CD8-positive, alpha-beta T cell (primary cell): ENCODE measurements at regions of chr11 and their contacts with region 1.

Region 1: DNA sequence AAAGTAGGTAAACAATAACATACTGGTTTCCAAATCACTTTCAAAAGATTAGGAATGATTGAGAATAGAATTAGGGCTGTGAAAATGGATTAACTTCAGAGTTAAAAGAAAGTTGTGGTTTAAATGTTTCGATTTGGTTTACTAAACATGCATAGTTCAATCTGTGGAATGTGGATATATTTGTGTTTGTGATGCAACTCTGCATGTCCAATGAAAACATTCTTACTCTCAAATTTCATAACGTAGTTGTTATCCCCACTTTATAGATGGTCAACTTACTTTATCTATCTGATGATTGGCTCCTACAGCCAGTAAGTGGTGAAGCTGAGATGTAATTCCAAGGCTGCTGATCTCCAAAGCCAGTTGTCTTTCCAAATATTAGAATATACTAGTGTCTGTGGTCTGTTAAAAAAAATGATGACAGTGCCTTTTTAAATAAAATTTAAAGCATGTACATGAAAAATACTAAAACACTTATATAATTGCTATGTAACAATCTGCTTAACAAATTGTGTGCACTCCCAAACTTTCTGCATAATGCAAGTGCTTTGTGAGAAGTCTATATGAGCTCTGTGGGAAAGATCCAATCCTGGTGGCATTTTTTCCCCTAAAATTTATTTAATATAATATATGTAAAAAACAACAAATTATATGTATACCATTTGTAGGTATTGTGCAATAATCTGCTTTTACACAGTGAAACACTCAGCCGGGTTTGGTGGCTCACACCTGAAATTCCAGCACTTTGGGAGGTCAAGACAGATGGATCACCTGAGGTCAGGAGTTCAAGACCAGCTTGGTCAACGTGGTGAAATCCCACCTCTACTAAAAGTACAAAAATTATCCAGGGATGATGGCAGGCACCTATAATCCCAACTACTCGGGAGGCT is 9.7 kb upstream of the SIK3 start:
- DNase-seq: no peak
- ATAC-seq: no peak
- H3K4me3 ChIP-seq: no peak overlapping the region
- H3K4me3 Mint-ChIP-seq: no peak overlapping the region
- H3K27ac ChIP-seq: no peak overlapping the region
- H3K27ac Mint-ChIP-seq: no peak overlapping the region
- H3K4me1 ChIP-seq: no peaks in the 10 kb centered on the region
- H3K4me1 Mint-ChIP-seq: peaks cover 3% of the 10 kb centered on the region
- H3K27me3 ChIP-seq: no peaks in the 10 kb centered on the region
- H3K27me3 Mint-ChIP-seq: no peaks in the 10 kb centered on the region
- CTCF ChIP-seq: no peak

Region 2: GRCh38 chr11:116787786-116788486 is 320.0 kb before region 1 on chr11 and contains the start of gene ZPR1:
- CTCF ChIA-PET with region 1: interaction called, 153 read pairs
- POLR2A ChIA-PET with region 1: no interaction called
- intact Hi-C with region 1: loop called in 1 of 2 experiments (anchors 1 kb)
- DNase-seq: peak; percentile 69 to 91 (median 87)
- ATAC-seq: peak; percentile 80
- H3K4me3 ChIP-seq: peak within 1 kb of the TSS; percentile 60 to 94
- H3K4me3 Mint-ChIP-seq: peak within 1 kb of the TSS; percentile 95
- H3K27ac ChIP-seq: peak within 1 kb of the TSS; percentile 80 to 95
- H3K27ac Mint-ChIP-seq: peak within 1 kb of the TSS; percentile 91
- H3K4me1 ChIP-seq: peaks cover 29% of the 10 kb centered on the region
- H3K4me1 Mint-ChIP-seq: peaks cover 54% of the 10 kb centered on the region
- H3K27me3 ChIP-seq: no peaks in the 10 kb centered on the region
- H3K27me3 Mint-ChIP-seq: no peaks in the 10 kb centered on the region
- CTCF ChIP-seq: no peak
- total RNA-seq, gene ZPR1: 132 to 134 TPM

Region 3: DNA sequence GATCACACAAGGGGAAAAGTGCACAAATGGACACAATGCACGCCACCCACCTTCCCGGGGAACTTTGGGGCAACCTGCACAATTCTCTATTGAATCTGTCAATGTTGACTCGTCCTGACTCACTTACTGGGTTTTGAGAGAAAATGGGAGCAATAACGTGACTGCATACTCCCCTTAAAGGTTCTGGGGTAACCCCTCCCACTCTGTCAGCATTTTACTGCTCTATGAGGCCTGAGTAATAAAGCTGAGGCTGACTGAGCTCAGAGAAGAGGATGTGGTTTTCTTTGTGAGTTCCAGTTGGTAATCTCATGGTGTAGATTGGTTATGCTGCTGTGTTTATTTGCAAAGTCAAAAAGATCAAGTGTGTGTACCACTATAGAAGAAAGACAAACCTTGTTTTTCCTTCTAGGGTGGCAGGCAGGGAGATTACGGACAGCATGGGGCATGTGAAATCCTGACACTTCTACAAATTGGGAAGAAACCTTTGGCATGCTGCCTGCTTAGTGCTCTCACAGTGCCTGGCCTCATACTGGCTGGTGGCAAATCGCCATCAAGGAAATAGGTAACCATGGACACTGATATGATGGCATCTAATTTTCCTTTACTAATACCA is 254.4 kb before region 1 on chr11:
- CTCF ChIA-PET with region 1: interaction called, 19 read pairs
- POLR2A ChIA-PET with region 1: no interaction called
- intact Hi-C with region 1: no loop called
- DNase-seq: peak; percentile 13 to 90 (median 61)
- ATAC-seq: peak; percentile 95
- H3K4me3 ChIP-seq: peak overlapping the region; percentile 4 to 7
- H3K4me3 Mint-ChIP-seq: peak overlapping the region; percentile 47
- H3K27ac ChIP-seq: peak overlapping the region; percentile 47 to 72
- H3K27ac Mint-ChIP-seq: peak overlapping the region; percentile 69
- H3K4me1 ChIP-seq: peaks cover 56% of the 10 kb centered on the region
- H3K4me1 Mint-ChIP-seq: peaks cover 73% of the 10 kb centered on the region
- H3K27me3 ChIP-seq: no peaks in the 10 kb centered on the region
- H3K27me3 Mint-ChIP-seq: no peaks in the 10 kb centered on the region
- CTCF ChIP-seq: no peak

Region 4: DNA sequence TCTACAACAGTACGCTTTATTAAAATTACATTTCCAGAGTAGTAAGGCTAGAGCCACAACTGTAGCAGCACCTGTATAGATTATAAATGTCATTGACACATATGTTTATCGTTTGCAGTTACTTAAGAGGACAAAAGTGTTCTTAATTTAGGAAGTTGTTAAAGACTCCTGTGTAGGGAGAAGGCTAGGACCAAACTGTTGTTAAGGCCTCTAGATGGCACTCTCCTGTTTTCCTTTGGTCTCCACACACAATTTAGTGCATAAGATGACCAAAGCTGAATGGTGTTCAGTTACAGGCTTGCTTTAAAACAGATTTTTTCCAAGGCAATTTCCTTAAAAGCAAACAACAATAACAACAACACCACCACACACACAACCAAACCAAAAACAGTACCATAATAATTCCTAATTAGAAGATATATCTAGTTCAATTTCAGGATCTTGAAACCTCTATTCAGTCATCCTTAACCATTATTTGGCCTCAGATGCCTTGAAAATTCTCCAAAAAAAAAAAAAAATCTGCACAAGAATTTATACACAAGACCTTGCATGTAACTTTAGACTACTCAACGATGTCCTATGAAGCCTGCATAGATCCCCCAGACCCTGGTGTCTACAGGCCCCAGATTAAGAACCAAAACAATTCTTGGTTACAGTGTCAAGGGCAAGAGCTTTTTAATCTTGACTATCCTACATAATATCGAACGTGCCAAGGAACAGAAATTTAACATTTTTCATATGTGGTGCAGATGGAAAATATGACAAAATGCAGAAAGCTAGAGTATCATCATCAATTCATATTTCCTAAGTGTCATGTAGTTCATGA is 227.9 kb before region 1 on chr11:
- CTCF ChIA-PET with region 1: interaction called, 104 read pairs
- POLR2A ChIA-PET with region 1: no interaction called
- intact Hi-C with region 1: loop called (anchors 1 kb)
- DNase-seq: peak in 4 of 9 experiments; percentile 15 to 76 (median 44)
- ATAC-seq: peak; percentile 75
- H3K4me3 ChIP-seq: no peak overlapping the region
- H3K4me3 Mint-ChIP-seq: no peak overlapping the region
- H3K27ac ChIP-seq: no peak overlapping the region
- H3K27ac Mint-ChIP-seq: no peak overlapping the region
- H3K4me1 ChIP-seq: no peaks in the 10 kb centered on the region
- H3K4me1 Mint-ChIP-seq: peaks cover 5% of the 10 kb centered on the region
- H3K27me3 ChIP-seq: no peaks in the 10 kb centered on the region
- H3K27me3 Mint-ChIP-seq: no peaks in the 10 kb centered on the region
- CTCF ChIP-seq: peak; percentile 71

Region 5: DNA sequence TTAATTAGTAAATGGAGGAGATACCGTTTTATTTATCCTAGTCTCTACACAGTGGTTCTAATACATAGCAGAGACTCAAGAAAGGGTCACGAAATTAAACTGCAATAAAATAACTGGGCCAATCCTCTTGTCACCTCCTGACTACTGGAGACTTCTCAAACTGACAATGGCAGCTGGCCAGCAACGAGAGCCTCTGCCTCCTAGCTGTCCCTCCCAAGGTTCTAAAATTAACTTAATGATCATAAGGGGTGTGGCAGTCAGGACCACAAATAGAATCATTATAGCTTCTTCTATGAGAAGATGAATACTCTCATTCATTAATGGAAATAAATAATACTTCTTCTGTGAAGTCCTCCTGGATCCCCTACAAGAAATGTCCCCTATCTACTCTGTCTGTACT is 206.7 kb before region 1 on chr11:
- CTCF ChIA-PET with region 1: interaction called, 11 read pairs
- POLR2A ChIA-PET with region 1: no interaction called
- intact Hi-C with region 1: no loop called
- DNase-seq: no peak
- ATAC-seq: no peak
- H3K4me3 ChIP-seq: no peak overlapping the region
- H3K4me3 Mint-ChIP-seq: no peak overlapping the region
- H3K27ac ChIP-seq: no peak overlapping the region
- H3K27ac Mint-ChIP-seq: no peak overlapping the region
- H3K4me1 ChIP-seq: peaks cover 8% of the 10 kb centered on the region
- H3K4me1 Mint-ChIP-seq: peaks cover 29% of the 10 kb centered on the region
- H3K27me3 ChIP-seq: no peaks in the 10 kb centered on the region
- H3K27me3 Mint-ChIP-seq: no peaks in the 10 kb centered on the region
- CTCF ChIP-seq: no peak

Region 6: DNA sequence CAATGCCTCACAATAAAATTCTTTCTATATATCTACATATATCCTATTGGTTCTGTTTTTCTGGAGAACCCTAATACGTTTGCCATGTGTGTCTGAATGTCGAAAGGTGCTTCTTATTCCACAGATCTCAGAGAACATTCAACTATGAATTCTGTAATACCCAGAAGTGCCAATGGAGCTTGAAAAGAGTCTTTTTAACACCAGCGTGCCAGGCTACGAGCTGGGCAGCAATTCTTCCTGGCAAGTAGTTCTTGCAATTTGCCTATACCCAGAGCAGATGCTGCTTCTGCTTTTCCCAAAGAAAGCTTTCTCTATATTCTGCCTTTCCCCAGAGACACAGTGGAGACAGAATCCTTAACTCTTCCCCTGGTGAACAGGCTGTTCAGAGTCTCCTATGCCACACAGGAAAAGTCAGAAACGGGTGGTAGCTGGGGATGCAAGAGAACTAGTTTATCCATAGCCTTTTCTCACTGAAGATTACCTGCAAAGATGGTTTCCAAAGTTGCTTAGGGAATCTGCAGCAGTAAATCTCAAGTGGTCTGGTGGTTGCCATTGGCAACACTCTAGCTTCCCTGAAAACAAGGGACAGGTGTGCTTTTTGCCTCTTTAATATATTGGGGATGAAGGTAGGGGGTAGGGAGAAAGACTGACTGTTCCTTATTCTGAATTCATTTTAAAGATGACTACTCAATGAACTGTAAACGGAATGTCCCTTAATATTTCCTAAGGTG is 19.4 kb after region 1 on chr11:
- CTCF ChIA-PET with region 1: interaction called, 37 read pairs
- POLR2A ChIA-PET with region 1: no interaction called
- intact Hi-C with region 1: no loop called
- DNase-seq: no peak
- ATAC-seq: no peak
- H3K4me3 ChIP-seq: no peak overlapping the region
- H3K4me3 Mint-ChIP-seq: no peak overlapping the region
- H3K27ac ChIP-seq: no peak overlapping the region
- H3K27ac Mint-ChIP-seq: no peak overlapping the region
- H3K4me1 ChIP-seq: no peaks in the 10 kb centered on the region
- H3K4me1 Mint-ChIP-seq: no peaks in the 10 kb centered on the region
- H3K27me3 ChIP-seq: no peaks in the 10 kb centered on the region
- H3K27me3 Mint-ChIP-seq: peaks cover 2% of the 10 kb centered on the region
- CTCF ChIP-seq: no peak

Region 7: DNA sequence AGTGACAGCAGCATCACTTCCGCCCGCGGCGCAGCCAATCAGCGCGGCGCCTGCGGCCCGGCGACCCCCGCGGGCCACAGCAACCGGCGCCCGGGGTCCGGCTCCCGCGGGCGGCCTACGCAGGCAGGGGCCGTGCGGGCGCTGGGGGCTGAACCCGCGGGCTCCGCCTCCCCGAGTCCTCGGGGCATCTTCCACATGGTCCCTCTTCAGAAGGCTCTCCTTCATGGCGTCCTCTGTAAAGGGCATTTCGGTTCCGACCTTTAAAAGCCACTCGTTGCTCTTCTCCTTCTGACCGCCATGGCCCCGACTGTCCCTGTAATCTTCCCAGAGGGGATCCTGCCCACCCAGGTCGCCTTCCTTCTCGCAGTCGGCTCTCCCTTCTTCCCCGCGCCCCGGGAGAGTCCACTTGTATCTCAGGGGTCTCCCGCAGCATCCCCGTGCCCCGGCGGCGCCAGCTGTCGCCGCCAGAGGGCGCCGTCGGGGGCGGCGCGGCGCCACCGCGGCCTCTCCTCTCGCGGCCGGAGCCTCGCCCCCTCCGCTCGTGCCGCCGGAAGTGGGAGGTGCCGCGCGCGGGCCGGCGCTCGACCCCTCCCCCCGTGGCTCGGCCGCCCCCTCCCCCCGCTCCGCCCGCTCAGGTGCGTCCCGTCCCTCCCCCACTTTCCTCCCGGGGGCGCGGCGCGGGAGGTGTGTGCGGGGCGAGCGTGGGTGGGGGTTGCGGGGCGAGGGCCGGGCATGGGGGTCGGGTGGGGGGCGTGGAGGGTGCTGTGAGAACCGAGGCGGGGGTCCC is 124.3 kb after region 1 on chr11 and contains the start of gene RNF214:
- CTCF ChIA-PET with region 1: interaction called, 32 read pairs
- POLR2A ChIA-PET with region 1: no interaction called
- intact Hi-C with region 1: loop called in 1 of 2 experiments (anchors 2 kb)
- DNase-seq: peak; percentile 51 to 89 (median 72)
- ATAC-seq: peak; percentile 75
- H3K4me3 ChIP-seq: peak within 1 kb of the TSS; percentile 70 to 91
- H3K4me3 Mint-ChIP-seq: peak within 1 kb of the TSS; percentile 96
- H3K27ac ChIP-seq: peak within 1 kb of the TSS; percentile 94 to 97
- H3K27ac Mint-ChIP-seq: peak within 1 kb of the TSS; percentile 98
- H3K4me1 ChIP-seq: peaks cover 30% of the 10 kb centered on the region
- H3K4me1 Mint-ChIP-seq: peaks cover 44% of the 10 kb centered on the region
- H3K27me3 ChIP-seq: no peaks in the 10 kb centered on the region
- H3K27me3 Mint-ChIP-seq: no peaks in the 10 kb centered on the region
- CTCF ChIP-seq: peak; percentile 64
- total RNA-seq, gene RNF214: 10.8 to 11.7 TPM